Prostate gland (tissue), 2 donors: ENCODE measurements at regions of chr9 and their contacts with region 1.

Region 1: DNA sequence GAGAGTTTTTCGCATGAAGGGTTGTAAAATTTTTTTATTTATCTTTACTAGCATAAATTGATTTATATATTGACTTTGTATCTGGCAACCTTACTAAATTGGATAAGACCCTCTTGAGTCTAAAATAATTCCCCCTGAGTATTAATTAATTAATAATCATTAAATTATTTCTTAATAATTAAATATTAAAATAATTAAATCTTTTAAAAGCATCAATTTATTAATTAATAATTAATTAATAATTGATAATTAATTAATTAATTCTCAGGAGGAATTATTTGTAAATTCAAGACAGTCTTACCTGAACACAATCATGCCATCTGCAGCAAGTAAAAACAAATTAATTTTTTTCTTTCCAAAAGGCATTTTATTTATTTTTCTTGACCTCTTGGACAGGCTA is 370.4 kb upstream of the PTPRD start:
- DNase-seq: no peak
- H3K4me3 ChIP-seq: no peak overlapping the region
- H3K27ac ChIP-seq: no peak overlapping the region
- H3K4me1 ChIP-seq: no peaks in the 10 kb centered on the region
- H3K27me3 ChIP-seq: no peaks in the 10 kb centered on the region
- CTCF ChIP-seq: no peak
- POLR2A ChIP-seq: no peak

Region 2: GRCh38 chr9:10899509-10899908 is 83.7 kb before region 1 on chr9:
- intact Hi-C with region 1: loop called (anchors 10 kb)
- DNase-seq: no peak
- H3K4me3 ChIP-seq: no peak overlapping the region
- H3K27ac ChIP-seq: no peak overlapping the region
- H3K4me1 ChIP-seq: no peaks in the 10 kb centered on the region
- H3K27me3 ChIP-seq: no peaks in the 10 kb centered on the region
- CTCF ChIP-seq: no peak
- POLR2A ChIP-seq: no peak

Region 3: GRCh38 chr9:11199335-11199734 is 216.1 kb after region 1 on chr9:
- intact Hi-C with region 1: no loop called
- DNase-seq: no peak
- H3K4me3 ChIP-seq: no peak overlapping the region
- H3K27ac ChIP-seq: no peak overlapping the region
- H3K4me1 ChIP-seq: no peaks in the 10 kb centered on the region
- H3K27me3 ChIP-seq: no peaks in the 10 kb centered on the region
- CTCF ChIP-seq: no peak
- POLR2A ChIP-seq: no peak